Breast epithelium (tissue), 4 donors: ENCODE measurements at regions of chr5 and their contacts with region 1.

Region 1: GRCh38 chr5:93497096-93497495 is 83.9 kb downstream of the NR2F1-AS1 start:
- DNase-seq: no peak
- H3K4me3 ChIP-seq: no peak overlapping the region
- H3K27ac ChIP-seq: no peak overlapping the region
- H3K4me1 ChIP-seq: no peaks in the 10 kb centered on the region
- H3K27me3 ChIP-seq: no peaks in the 10 kb centered on the region
- CTCF ChIP-seq: no peak
- POLR2A ChIP-seq: no peak

Region 2: DNA sequence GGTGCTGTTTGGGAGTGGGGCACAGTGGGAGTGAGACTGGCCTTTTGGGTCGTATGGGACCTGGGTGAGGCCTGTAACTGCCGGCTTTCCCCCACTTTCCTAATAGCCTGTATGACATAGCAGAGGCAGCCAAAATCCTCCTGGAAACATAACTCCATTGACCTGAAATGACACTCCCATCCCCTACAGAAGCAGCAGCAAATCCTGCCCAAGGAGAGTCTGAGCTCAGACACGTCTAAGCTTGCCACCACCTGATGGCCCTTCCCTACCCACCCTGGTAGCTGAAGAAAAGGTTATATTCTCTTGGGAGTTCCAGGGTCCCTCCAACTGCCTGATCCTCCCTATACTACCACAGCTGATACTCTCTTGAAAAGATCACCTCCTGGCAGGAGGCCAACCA is 1934.2 kb before region 1 on chr5:
- intact Hi-C with region 1: no loop called
- DNase-seq: no peak
- H3K4me3 ChIP-seq: no peak overlapping the region
- H3K27ac ChIP-seq: no peak overlapping the region
- H3K4me1 ChIP-seq: no peaks in the 10 kb centered on the region
- H3K27me3 ChIP-seq: no peaks in the 10 kb centered on the region
- CTCF ChIP-seq: no peak
- POLR2A ChIP-seq: no peak

Region 3: DNA sequence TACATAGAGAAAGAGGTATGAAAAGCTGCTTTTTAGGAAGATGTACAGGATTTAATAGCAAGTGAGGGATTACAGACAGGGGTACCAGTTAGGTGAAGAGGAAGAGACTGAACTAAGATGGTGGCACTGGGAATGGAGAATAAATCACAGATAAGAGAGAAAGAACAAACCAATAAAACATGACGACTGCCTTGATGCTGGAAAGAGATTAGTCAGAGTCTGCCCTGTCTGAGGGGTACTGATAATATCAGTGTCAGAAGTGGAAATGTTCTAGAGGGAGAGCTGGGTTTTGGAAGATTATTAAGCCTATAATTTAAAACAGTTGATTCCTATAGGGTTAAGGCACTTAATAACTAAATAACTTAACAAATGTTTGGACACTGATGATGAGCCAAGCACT is 163.6 kb after region 1 on chr5:
- intact Hi-C with region 1: loop called (anchors 5 kb)
- DNase-seq: no peak
- H3K4me3 ChIP-seq: no peak overlapping the region
- H3K27ac ChIP-seq: no peak overlapping the region
- H3K4me1 ChIP-seq: no peaks in the 10 kb centered on the region
- H3K27me3 ChIP-seq: no peaks in the 10 kb centered on the region
- CTCF ChIP-seq: no peak
- POLR2A ChIP-seq: no peak